Left ventricle myocardium inferior (tissue), 1 donor: ENCODE measurements at regions of chr9 and their contacts with region 1.

Region 1: GRCh38 chr9:94250456-94250855 is 8.6 kb upstream of the ZNF169 start:
- DNase-seq: no peak
- H3K4me3 ChIP-seq: no peak overlapping the region
- H3K27ac ChIP-seq: no peak overlapping the region
- H3K4me1 ChIP-seq: no peaks in the 10 kb centered on the region
- H3K27me3 ChIP-seq: no peaks in the 10 kb centered on the region
- CTCF ChIP-seq: no peak

Region 2: GRCh38 chr9:94269264-94269663 is 18.8 kb after region 1 on chr9:
- intact Hi-C with region 1: loop called (anchors 2 kb)
- DNase-seq: no peak
- H3K4me3 ChIP-seq: no peak overlapping the region
- H3K27ac ChIP-seq: no peak overlapping the region
- H3K4me1 ChIP-seq: peaks cover 11% of the 10 kb centered on the region
- H3K27me3 ChIP-seq: no peaks in the 10 kb centered on the region
- CTCF ChIP-seq: no peak

Region 3: DNA sequence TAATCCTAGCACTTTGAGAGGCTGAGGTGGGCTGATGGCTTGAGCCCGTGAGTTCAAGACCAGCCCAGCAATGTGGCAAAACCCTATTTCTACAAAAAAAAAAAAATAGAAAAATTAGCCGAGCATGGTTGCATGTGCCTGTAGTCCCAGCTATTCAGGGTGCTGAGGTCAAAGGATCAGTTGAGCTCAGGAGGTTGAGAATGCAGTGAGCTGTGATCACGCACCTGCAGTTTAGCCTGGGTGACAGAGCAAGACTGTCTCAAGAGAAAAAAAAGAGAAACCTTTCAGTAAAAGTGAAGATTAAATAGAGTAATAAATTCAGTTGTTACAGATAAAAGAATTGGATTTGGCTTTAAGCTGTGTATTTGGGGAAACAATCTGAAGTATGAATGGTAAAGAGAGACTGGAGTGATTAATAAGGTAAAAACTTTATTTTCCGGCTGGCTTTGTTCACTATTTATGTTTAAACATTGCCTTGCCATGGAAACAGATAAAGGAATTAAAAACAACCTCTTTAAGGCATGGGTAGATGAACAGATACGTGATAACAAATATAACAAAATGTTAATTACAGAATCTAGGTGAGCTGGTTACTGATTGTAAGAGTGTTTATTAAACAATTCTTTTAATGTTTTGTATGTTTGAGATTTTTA is 248.5 kb after region 1 on chr9:
- intact Hi-C with region 1: no loop called
- DNase-seq: no peak
- H3K4me3 ChIP-seq: no peak overlapping the region
- H3K27ac ChIP-seq: no peak overlapping the region
- H3K4me1 ChIP-seq: no peaks in the 10 kb centered on the region
- H3K27me3 ChIP-seq: peaks cover 29% of the 10 kb centered on the region
- CTCF ChIP-seq: no peak

Region 4: DNA sequence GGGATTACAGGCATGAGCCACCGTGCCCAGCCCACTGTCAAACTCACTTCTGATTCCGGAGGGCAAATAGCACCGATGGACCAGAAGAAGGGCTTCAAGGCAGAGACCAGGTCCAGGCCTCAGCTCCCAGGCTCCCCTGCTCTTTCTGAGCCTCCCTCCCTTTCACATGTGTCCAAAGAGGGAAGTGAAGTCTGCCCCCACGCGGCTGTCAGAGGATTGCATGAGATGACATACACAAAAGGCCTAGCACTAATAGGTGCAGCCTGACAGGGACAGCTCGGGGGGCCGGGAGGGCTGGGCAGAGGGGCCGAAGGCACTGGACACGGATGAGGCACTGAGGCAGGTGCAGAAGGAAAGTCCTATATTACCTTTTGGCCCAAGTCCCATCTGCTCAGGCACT is 372.8 kb after region 1 on chr9:
- intact Hi-C with region 1: no loop called
- DNase-seq: no peak
- H3K4me3 ChIP-seq: no peak overlapping the region
- H3K27ac ChIP-seq: no peak overlapping the region
- H3K4me1 ChIP-seq: no peaks in the 10 kb centered on the region
- H3K27me3 ChIP-seq: peaks cover 4% of the 10 kb centered on the region
- CTCF ChIP-seq: peak; percentile 35